MCF 10A (cell line): ENCODE measurements at regions of chr19 and their contacts with region 1.

Region 1: DNA sequence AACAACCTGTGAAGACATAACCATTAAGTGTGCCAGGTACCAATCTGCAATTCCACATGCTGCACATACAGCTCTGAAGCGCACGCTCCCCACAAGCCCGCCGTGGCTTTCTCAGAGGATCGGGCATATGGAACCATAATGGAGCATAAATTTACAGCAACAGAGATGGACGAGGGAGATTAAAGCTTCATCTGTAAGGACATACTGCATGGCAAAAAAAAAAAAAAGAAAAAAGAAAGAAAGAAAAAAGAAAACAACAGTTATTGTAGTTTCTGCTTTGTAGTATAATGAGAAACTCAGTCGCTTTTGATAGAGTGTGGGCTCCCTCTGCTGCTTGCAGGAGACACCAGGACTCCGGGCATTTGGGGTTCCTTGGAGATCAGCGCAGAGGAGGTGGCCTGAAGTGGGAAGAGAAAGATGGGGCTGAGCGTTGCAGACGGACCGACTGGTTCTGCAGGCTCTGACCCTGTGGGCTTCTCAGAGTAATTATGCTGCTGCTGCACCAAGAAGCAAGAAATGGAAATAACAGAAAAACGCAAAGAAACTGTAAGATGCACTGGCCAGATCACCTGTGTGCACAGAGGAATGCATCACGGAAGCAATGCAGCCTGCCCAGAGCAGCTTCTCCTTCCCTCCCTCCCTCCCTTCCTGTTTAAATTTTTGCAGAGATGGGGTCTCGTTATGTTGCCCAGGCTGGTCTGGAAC is 10.8 kb upstream of the PDCD5 start:
- DNase-seq: peak; percentile 79
- H3K4me3 Mint-ChIP-seq: peak overlapping the region; percentile 56
- H3K27ac Mint-ChIP-seq: no peak overlapping the region
- H3K4me1 Mint-ChIP-seq: peaks cover 8% of the 10 kb centered on the region
- H3K27me3 Mint-ChIP-seq: no peaks in the 10 kb centered on the region
- CTCF ChIP-seq: peak; percentile 97

Region 2: DNA sequence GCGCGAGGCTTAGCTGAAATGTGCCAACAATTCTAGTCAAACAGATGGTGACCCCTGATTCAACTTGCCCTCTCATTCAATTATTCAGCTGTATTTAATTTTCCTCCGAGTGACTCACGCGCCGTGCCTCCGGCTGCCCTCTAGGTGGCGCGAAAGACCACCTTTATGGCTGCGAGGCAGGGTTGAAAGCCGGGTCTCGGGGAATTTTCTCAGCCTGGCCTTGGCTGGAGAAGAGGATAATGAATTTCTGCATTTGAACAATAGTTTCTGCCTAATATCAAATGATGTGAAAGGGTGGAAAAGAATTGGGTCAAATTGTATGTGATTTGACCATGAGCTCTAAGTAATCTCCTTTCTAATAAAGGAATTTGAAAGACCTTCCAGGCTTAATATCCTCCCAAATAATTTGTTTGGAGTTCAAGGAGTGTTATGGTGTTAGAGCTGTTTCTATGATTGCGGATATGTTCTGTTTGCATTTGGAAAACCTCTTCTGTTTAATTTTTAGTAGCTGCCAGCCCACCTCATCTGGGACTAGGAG is 1887.2 kb before region 1 on chr19:
- CTCF ChIA-PET with region 1: interaction called, 28 read pairs
- POLR2A ChIA-PET with region 1: no interaction called
- intact Hi-C with region 1: loop called (anchors 1 kb)
- DNase-seq: peak; percentile 63
- H3K4me3 Mint-ChIP-seq: no peak overlapping the region
- H3K27ac Mint-ChIP-seq: no peak overlapping the region
- H3K4me1 Mint-ChIP-seq: no peaks in the 10 kb centered on the region
- H3K27me3 Mint-ChIP-seq: no peaks in the 10 kb centered on the region
- CTCF ChIP-seq: peak; percentile 75

Region 3: DNA sequence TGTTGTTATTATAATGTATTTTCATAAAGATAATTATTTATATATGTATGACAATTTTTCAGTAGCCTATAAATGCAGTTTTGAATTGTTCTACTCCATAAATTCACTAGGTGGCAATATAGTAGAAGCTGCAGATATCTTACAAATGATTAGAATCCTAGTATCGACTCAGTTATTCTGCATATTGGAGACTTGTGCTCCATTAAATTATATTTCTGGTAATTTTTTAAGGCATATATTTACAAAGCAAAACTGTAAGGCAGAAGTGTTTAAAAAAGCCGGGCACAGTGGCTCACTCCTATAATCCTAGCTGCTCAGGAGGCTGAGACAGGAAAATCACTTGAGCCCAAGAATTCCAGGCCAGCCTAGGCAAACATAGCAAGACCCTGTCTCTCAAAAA is 106.0 kb before region 1 on chr19:
- CTCF ChIA-PET with region 1: interaction called, 110 read pairs
- POLR2A ChIA-PET with region 1: interaction called, 4 read pairs
- intact Hi-C with region 1: loop called (anchors 1 kb)
- DNase-seq: peak; percentile 25
- H3K4me3 Mint-ChIP-seq: no peak overlapping the region
- H3K27ac Mint-ChIP-seq: no peak overlapping the region
- H3K4me1 Mint-ChIP-seq: no peaks in the 10 kb centered on the region
- H3K27me3 Mint-ChIP-seq: no peaks in the 10 kb centered on the region
- CTCF ChIP-seq: peak; percentile 24

Region 4: GRCh38 chr19:32558607-32559228 is 11.5 kb before region 1 on chr19:
- CTCF ChIA-PET with region 1: interaction called, 13 read pairs
- POLR2A ChIA-PET with region 1: no interaction called
- intact Hi-C with region 1: no loop called
- DNase-seq: no peak
- H3K4me3 Mint-ChIP-seq: no peak overlapping the region
- H3K27ac Mint-ChIP-seq: no peak overlapping the region
- H3K4me1 Mint-ChIP-seq: no peaks in the 10 kb centered on the region
- H3K27me3 Mint-ChIP-seq: no peaks in the 10 kb centered on the region
- CTCF ChIP-seq: no peak

Region 5: DNA sequence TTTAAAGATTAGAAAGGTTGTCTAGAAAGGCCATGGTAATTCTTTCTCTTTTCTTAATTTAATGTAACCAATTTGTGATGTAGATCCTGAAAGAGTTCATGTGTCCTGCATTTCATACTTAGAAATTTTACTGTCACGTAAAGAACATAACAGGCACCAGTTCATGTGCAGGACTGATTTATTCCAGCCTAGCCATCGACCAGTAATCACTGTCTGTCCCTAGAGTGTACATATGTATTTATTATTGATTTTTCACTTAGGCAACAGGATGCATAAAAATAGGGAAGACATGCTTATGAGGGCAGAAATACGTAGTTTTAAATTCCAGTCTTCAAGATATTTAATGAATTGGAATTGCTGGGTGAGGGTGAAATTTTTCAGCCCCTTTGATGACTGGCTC is 187.0 kb after region 1 on chr19:
- CTCF ChIA-PET with region 1: no interaction called
- POLR2A ChIA-PET with region 1: no interaction called
- intact Hi-C with region 1: no loop called
- DNase-seq: no peak
- H3K4me3 Mint-ChIP-seq: no peak overlapping the region
- H3K27ac Mint-ChIP-seq: no peak overlapping the region
- H3K4me1 Mint-ChIP-seq: no peaks in the 10 kb centered on the region
- H3K27me3 Mint-ChIP-seq: no peaks in the 10 kb centered on the region
- CTCF ChIP-seq: no peak